Activated naive CD4-positive, alpha-beta T cell treated with anti-CD3 and anti-CD28 coated beads for 36 hours (primary cell): ENCODE measurements at regions of chr5 and their contacts with region 1.

Region 1: GRCh38 chr5:50962934-50963872 is 296.8 kb downstream of the PARP8 start:
- DNase-seq: peak; percentile 84
- H3K4me3 Mint-ChIP-seq: peak overlapping the region; percentile 70
- H3K27ac Mint-ChIP-seq: no peak overlapping the region
- H3K4me1 Mint-ChIP-seq: peaks cover 40% of the 10 kb centered on the region
- H3K27me3 Mint-ChIP-seq: peaks cover 64% of the 10 kb centered on the region

Region 2: GRCh38 chr5:50751064-50751657 is 212.0 kb before region 1 on chr5:
- CTCF ChIA-PET with region 1: no interaction called
- intact Hi-C with region 1: no loop called
- DNase-seq: peak; percentile 52
- H3K4me3 Mint-ChIP-seq: no peak overlapping the region
- H3K27ac Mint-ChIP-seq: peak overlapping the region; percentile 47
- H3K4me1 Mint-ChIP-seq: peaks cover 37% of the 10 kb centered on the region
- H3K27me3 Mint-ChIP-seq: no peaks in the 10 kb centered on the region

Region 3: DNA sequence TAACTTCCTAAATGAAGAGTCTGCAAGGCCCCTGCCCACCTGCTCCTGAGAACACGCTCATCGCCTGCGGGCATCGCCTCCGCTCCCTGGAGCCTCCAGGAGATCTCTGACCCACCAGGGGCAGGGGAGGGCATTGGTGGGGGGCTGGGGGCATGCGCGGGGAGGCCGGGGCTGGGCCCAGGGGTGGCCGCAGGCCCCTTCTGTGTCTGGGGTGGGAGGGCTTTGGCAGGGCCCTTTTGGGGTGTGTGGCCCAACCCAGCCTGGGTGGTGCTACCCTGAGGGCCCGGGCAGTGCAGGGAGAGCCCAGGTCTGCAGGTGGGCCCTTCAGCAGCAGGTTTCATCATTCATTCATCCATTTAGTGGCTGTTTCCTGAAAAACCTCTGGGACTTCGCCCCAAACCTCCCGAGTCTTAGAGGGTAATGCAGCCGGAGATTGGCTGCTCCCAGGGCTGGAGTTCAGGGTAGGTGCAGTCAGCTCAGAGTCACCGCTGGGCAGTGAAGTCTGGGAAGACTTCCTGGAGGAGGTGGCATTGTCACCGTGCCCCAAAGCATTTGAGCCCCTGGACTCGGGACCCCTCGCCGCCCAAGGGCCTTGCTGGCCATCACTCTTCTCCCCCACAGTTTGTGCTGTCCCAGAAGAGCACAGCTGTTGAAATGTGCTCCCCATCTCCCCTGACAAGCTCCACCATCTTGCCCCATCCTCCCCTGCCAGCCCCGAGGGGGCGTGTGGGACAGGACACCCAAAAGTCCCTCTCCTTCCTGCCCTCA is 41.7 kb before region 1 on chr5:
- CTCF ChIA-PET with region 1: no interaction called
- intact Hi-C with region 1: no loop called
- DNase-seq: no peak
- H3K4me3 Mint-ChIP-seq: no peak overlapping the region
- H3K27ac Mint-ChIP-seq: no peak overlapping the region
- H3K4me1 Mint-ChIP-seq: no peaks in the 10 kb centered on the region
- H3K27me3 Mint-ChIP-seq: peaks cover 16% of the 10 kb centered on the region

Region 4: DNA sequence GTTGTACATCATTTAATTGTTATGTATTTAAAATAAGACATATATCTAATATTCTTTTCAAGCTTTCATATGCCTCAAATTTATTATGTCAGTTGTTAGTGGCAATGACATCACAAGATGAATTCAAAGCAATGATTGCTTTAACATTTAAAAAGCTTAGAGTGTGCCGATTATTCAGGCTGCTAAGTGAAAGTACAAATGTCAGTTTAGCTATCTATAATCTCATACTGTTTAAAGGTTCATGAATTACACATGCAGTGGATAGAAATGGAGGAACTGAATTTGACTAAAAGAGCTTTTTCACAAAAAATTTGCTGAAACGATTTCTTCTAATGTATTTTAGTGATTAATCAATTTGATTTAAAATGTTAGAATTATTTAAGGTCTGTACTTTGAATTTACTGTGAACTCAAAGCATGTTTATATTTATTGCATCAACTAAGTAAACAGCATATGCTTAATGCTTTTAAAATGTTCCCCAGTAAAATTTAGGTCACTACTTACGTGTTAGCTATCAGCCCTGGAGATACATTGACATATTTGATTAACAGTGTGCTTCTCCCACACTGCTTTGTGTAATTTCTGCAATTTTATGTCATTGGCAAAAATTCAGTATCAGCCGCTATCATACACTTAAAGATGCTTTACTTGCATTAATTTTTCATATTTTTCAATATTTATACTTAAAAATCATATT is 38.2 kb after region 1 on chr5:
- CTCF ChIA-PET with region 1: no interaction called
- intact Hi-C with region 1: no loop called
- DNase-seq: no peak
- H3K4me3 Mint-ChIP-seq: no peak overlapping the region
- H3K27ac Mint-ChIP-seq: no peak overlapping the region
- H3K4me1 Mint-ChIP-seq: no peaks in the 10 kb centered on the region
- H3K27me3 Mint-ChIP-seq: peaks cover 2% of the 10 kb centered on the region

Region 5: GRCh38 chr5:51960617-51961115 is 997.5 kb after region 1 on chr5:
- CTCF ChIA-PET with region 1: no interaction called
- intact Hi-C with region 1: loop called (anchors 2 kb)
- DNase-seq: no peak
- H3K4me3 Mint-ChIP-seq: no peak overlapping the region
- H3K27ac Mint-ChIP-seq: no peak overlapping the region
- H3K4me1 Mint-ChIP-seq: no peaks in the 10 kb centered on the region
- H3K27me3 Mint-ChIP-seq: no peaks in the 10 kb centered on the region

Region 6: GRCh38 chr5:52356311-52356918 is 1393.2 kb after region 1 on chr5:
- CTCF ChIA-PET with region 1: interaction called, 3 read pairs
- intact Hi-C with region 1: loop called (anchors 2 kb)
- DNase-seq: no peak
- H3K4me3 Mint-ChIP-seq: no peak overlapping the region
- H3K27ac Mint-ChIP-seq: no peak overlapping the region
- H3K4me1 Mint-ChIP-seq: no peaks in the 10 kb centered on the region
- H3K27me3 Mint-ChIP-seq: no peaks in the 10 kb centered on the region

Region 7: DNA sequence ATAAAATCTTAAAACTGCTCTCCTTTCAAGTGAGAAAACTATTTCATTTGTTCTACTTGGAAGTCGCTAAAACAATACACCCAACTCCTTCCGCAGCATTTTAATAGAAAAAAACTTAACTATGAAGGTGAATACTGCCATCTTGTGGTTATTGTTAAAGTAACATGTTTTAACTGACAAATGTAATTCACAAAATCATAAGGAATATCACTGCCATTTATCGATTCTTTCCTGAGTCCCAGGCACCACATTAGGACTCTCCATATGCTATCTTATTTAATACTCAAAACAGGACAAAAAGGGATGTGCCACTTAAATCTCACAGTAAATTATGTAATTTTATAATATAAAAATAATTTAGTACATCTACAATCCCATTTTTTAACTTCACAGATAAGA is 1694.0 kb after region 1 on chr5:
- CTCF ChIA-PET with region 1: interaction called, 8 read pairs
- intact Hi-C with region 1: loop called (anchors 1 kb)
- DNase-seq: no peak
- H3K4me3 Mint-ChIP-seq: no peak overlapping the region
- H3K27ac Mint-ChIP-seq: no peak overlapping the region
- H3K4me1 Mint-ChIP-seq: no peaks in the 10 kb centered on the region
- H3K27me3 Mint-ChIP-seq: peaks cover 6% of the 10 kb centered on the region

Region 8: DNA sequence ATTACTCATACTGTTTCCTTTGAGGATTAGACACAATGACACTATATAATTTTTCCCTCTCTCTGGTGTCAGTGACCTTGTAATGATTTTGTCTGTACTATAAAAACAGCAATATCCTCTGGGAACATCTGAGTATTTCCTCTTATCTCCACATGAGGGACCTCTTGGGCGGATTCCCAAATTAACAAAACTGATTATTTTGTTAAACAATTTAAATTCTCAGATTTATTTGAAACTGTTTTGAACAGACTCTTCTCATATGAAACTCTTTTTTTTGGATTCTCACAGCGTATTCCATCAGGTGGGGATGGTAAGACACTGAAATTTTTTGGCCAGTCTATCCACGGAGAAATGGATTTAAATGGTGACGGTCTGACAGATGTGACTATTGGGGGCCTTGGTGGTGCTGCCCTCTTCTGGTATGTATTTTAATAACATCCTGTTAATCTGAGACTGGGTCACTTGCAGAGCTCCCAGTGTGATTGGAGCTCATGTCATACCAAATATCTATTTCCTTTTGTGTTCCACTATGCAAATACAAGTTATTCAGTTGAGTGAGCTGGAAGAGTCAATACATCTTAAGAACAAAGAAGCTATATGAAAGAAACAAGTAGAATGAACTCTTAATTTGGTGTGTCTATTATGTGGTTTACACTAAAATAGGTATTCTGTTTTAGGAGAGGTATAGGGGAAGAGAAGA is 1952.1 kb after region 1 on chr5:
- CTCF ChIA-PET with region 1: no interaction called
- intact Hi-C with region 1: loop called (anchors 5 kb)
- DNase-seq: peak; percentile 64
- H3K4me3 Mint-ChIP-seq: peak overlapping the region; percentile 27
- H3K27ac Mint-ChIP-seq: no peak overlapping the region
- H3K4me1 Mint-ChIP-seq: peaks cover 9% of the 10 kb centered on the region
- H3K27me3 Mint-ChIP-seq: no peaks in the 10 kb centered on the region